H1 (cell line): ENCODE measurements at regions of chr5 and their contacts with region 1.

Region 1: GRCh38 chr5:39270225-39270848 is 51.0 kb upstream of the FYB1 start:
- DNase-seq: no peak
- H3K4me3 ChIP-seq: no peak overlapping the region
- H3K27ac ChIP-seq: no peak overlapping the region
- H3K4me1 ChIP-seq: no peaks in the 10 kb centered on the region
- H3K27me3 ChIP-seq: no peaks in the 10 kb centered on the region
- CTCF ChIP-seq: no peak
- EP300 ChIP-seq: no peak
- POLR2A ChIP-seq: no peak
- RAD21 ChIP-seq: no peak

Region 2: DNA sequence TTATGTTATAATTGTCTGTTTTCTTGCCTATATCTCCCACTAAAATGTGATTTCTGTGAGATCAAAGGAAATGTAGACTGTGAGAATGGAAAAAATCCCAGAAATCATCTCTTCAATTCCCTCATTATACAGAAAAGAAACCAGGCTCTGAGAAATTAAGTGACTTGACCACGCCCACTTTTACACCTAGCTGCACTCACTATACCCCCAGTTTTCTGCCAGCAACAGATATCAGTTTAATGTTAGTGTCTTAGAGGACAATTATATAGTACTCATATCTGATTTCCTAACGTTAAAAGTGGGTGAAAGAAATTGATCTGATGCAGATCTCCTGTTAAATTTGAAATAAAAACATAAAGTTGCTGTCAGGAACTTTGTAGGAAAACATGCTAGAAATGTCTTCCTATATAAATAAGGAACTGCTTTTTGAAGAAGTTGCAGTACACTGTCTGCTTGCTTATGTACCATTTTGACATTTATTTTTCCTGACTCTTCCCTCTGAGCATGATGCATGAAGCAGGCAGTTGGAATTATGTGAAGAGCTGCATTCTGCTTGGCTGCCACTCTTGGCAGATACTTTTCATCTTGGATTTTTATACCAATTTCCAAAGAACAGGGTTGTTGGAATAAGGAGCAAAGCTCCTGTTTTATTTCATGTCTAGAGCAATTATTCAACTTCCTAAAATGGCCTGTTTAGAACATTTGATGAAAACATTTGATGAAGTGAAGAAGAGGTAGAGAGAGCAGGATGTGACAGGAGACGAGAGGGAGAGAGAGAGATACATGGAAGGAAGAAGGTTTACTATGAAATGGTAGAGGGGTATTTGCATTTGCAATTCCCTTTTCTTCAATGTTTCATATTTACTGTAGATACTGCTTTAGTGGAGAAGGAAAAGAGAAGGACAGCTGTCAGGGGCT is 138.9 kb before region 1 on chr5:
- CTCF ChIA-PET with region 1: no interaction called
- POLR2A ChIA-PET with region 1: no interaction called
- DNase-seq: no peak
- H3K4me3 ChIP-seq: no peak overlapping the region
- H3K27ac ChIP-seq: no peak overlapping the region
- H3K4me1 ChIP-seq: no peaks in the 10 kb centered on the region
- H3K27me3 ChIP-seq: no peaks in the 10 kb centered on the region
- CTCF ChIP-seq: no peak
- EP300 ChIP-seq: no peak
- POLR2A ChIP-seq: no peak
- RAD21 ChIP-seq: no peak

Region 3: DNA sequence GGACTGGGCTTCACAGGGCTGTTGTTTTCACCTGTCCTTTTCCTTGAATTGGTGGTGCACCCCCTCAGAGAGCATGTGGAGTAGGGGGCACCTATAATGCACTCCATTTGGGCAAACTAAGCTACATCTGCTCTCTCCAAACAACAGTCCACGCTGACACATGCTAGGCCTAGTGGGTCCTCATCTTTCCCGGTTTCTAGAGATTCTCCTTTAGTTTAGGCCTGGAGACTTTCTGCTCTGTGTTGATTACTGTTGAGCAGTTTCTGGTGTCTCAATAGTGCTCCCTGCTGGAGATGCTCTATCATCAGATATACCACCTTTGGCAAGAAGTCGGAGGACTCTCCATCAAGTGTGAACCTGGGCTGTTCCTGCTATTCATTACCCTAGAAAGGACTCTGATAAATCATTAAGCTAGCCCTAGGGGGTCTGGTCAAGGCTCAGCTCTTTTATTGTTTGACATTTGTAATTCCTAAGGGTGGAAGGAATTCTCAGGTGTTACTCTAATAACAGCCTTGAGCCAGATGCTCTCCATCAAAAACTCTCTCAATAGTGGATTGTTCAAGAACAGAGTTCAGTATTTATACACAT is 13.0 kb after region 1 on chr5:
- CTCF ChIA-PET with region 1: interaction called, 11 read pairs
- POLR2A ChIA-PET with region 1: no interaction called
- DNase-seq: peak; percentile 17 to 49
- H3K4me3 ChIP-seq: no peak overlapping the region
- H3K27ac ChIP-seq: no peak overlapping the region
- H3K4me1 ChIP-seq: no peaks in the 10 kb centered on the region
- H3K27me3 ChIP-seq: no peaks in the 10 kb centered on the region
- CTCF ChIP-seq: peak in 2 of 3 experiments; percentile 65 to 73; a peak in 3 of 4 replicates
- EP300 ChIP-seq: no peak
- POLR2A ChIP-seq: no peak
- RAD21 ChIP-seq: peak; percentile 79 to 86